GM12878 (cell line): ENCODE measurements at regions of chr2 and their contacts with region 1.

Region 1: DNA sequence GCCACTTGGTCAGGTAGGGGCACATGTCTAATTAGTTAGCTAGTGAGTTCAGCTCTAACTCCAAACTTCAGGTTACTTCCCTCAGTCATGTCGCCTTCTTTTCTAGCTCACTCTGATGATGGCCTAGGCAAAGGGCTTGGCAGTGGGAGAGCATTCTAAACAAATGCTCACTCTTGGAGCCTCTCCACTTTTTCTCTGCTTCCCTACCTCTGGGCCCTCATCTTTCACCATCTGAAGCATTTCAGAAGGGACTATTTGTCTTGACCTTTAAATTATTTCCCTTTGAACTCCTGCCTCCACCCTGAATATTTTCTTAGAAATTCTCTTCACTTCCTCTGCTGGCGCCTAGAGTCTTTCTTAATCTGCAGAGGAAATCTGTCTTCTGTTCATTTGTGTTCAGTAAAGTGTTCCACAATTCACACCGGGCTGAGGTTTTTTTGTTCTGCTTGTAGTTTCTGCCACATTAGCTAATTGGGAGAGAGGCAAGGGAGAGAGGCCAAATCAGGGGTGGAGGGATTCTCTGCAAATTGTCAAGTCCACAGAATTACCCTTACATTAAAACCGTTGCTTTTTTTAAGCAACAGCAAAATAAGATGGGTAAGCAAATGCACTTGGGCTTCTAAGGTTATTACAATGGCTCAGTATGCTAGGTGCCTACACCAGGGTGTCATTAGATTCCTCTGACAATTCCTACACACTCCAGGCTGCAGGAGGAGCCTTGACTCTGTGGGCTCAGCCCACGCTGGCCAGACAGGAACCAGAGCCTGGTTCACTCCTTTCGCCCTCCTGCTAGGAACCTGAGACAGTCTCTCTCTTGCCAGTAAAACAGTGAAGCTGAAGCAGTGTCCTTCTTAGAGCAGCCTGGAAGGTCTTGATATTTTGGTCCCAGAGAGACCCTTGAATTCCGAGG is 5.5 kb downstream of the MSGN1 start:
- DNase-seq: no peak
- ATAC-seq: peak; percentile 65
- H3K4me3 ChIP-seq: 0 out of 2 replicates have a peak overlapping the region, but pooled peaks have one; percentile 48
- H3K27ac ChIP-seq: peak overlapping the region; percentile 55
- H3K4me1 ChIP-seq: peaks cover 29% of the 10 kb centered on the region
- H3K27me3 ChIP-seq: no peaks in the 10 kb centered on the region
- CTCF ChIP-seq: no peak
- EP300 ChIP-seq: peak; percentile 37 to 40; a peak in 1 of 4 replicates
- POLR2A ChIP-seq: no peak
- RAD21 ChIP-seq: no peak; the same call in 1 of the 2 replicates

Region 2: DNA sequence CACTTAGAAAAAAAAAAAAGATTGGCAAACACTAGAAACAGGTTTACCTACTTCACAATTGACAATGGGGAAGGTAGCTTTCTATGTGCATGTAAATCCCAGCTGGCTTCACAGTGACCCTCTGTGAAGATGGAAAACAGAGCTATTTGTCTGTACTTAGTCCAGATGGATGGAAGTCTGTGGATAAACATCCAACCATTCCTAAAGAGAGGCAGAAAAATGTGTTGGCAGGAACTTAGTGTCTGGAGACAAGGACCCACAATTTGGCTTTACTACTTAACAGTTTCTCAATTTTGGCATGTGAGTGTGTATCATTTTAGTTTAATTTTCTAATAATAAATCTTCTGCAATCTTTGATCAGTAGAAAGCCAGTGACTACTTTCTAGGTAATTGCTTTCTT is 457.9 kb before region 1 on chr2:
- CTCF ChIA-PET with region 1: no interaction called
- POLR2A ChIA-PET with region 1: no interaction called
- RAD21 ChIA-PET with region 1: no interaction called
- SMC1A ChIA-PET with region 1: no interaction called
- in situ Hi-C with region 1: no loop called
- intact Hi-C with region 1: no loop called
- DNase-seq: no peak
- ATAC-seq: no peak
- H3K4me3 ChIP-seq: no peak overlapping the region
- H3K27ac ChIP-seq: no peak overlapping the region
- H3K4me1 ChIP-seq: no peaks in the 10 kb centered on the region
- H3K27me3 ChIP-seq: no peaks in the 10 kb centered on the region
- CTCF ChIP-seq: no peak
- EP300 ChIP-seq: no peak
- POLR2A ChIP-seq: no peak
- RAD21 ChIP-seq: no peak

Region 3: DNA sequence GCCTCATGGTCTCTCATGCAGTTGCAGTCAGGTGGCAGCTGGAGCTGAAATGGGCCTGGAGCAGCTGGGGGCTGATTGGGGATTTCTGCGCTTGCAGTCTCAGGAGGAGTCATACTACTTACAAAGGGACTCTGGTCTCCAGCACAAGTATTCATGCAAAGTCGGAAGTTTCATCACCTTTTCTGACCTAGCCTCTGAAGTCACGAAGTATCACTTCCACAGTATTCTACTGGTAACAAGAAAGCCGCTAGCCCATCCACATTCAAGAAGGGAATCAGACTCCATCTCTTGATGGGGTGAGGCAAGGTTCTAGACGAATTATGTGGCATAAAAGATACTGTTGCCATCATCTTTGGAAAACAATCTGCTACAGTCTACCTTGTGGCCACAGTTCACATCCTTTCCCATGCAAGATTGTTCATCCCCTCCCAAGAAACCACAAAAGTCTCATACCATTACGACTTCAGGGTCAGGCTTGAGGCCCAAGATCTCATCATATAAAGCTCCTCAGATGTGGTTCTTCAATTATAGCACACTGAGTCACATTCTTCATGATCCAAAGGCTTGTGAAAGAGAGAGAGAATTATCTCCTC is 163.4 kb before region 1 on chr2:
- CTCF ChIA-PET with region 1: interaction called, 4 read pairs
- POLR2A ChIA-PET with region 1: no interaction called
- RAD21 ChIA-PET with region 1: no interaction called
- SMC1A ChIA-PET with region 1: interaction called, 3 read pairs
- in situ Hi-C with region 1: no loop called
- intact Hi-C with region 1: loop called (anchors 5 kb)
- DNase-seq: peak; percentile 64
- ATAC-seq: peak; percentile 95
- H3K4me3 ChIP-seq: no peak overlapping the region
- H3K27ac ChIP-seq: peak overlapping the region; percentile 57
- H3K4me1 ChIP-seq: peaks cover 15% of the 10 kb centered on the region
- H3K27me3 ChIP-seq: no peaks in the 10 kb centered on the region
- CTCF ChIP-seq: no peak
- EP300 ChIP-seq: peak in 1 of 2 experiments; percentile 33; a peak in 1 of 4 replicates
- POLR2A ChIP-seq: no peak
- RAD21 ChIP-seq: no peak

Region 4: DNA sequence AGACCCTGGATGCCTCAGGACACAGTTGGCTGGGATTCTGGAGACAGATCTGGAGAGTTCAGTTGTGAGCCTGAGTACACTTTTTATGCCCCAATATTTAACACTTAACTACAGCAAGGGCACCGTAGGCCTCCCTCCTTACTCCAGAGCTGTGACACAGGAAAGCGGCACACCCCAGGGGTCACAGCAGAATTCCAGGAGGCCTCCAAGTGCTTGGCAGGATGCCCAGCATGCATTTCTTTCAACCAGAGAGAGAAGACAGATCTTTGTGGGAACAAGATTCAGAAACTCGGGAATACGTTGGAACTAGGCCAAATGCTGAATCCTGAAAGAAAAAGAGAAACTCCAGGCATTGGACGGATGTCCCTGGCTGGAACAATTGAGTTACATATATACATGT is 966.8 kb after region 1 on chr2:
- CTCF ChIA-PET with region 1: no interaction called
- POLR2A ChIA-PET with region 1: no interaction called
- RAD21 ChIA-PET with region 1: no interaction called
- SMC1A ChIA-PET with region 1: no interaction called
- in situ Hi-C with region 1: no loop called
- intact Hi-C with region 1: no loop called
- DNase-seq: no peak
- ATAC-seq: no peak
- H3K4me3 ChIP-seq: no peak overlapping the region
- H3K27ac ChIP-seq: no peak overlapping the region
- H3K4me1 ChIP-seq: no peaks in the 10 kb centered on the region
- H3K27me3 ChIP-seq: no peaks in the 10 kb centered on the region
- CTCF ChIP-seq: no peak
- EP300 ChIP-seq: no peak
- POLR2A ChIP-seq: no peak
- RAD21 ChIP-seq: no peak